Activated CD4-positive, alpha-beta T cell treated with anti-CD3 and anti-CD28 coated beads for 36 hours (primary cell): ENCODE measurements at regions of chr3 and their contacts with region 1.

Region 1: DNA sequence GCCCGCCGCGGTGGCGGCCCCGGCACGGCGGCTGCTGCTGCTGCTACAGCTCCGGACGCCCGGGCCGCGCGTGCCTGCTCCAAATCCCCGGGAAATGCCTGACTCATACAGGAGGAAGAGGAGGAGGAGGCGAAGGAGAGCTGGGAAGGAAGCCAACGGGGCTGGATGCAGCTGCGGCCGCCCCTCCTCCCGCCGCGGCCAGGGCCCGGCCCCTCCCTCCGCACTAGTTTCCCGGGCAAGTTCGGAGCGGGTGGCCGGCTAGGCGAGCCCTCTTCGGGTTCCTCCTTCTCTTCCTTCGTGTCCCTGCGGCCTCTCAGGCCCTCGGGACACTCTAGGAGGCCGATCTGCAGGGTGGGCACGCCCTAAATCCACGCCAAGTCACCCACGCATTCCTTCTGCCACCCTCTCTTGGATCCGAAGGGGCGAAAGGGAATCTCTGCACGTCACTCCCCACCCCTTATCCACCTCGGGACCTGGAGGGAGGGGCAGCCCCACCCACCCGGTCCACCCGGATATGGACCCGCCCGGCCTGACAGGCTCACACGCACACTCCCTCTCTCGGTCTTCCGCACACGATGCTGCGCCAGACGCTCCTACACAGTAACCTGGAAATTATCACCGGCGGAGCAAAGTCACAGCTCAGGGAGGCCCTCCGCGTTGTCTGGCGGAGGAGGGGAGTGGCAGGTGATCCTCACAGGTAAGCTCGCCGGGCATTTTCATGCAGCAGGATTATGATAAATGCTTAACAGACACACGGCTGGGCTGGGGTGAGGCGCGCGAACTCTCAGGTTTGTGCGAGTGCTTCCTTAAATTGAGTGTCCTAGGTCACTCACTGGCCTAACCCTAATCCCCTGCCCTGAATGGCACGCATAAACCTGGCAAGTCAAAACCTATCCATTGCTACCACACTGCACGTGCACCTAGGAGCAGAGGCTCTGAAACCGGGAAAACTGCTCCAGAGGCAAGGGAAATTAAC is at the starts of genes OSBPL10 and ZNF860:
- DNase-seq: peak; percentile 58
- ATAC-seq: peak; percentile 44
- H3K4me3 Mint-ChIP-seq: peak within 1 kb of the TSS; percentile 74
- H3K27ac Mint-ChIP-seq: peak within 1 kb of the TSS; percentile 53
- H3K4me1 Mint-ChIP-seq: peaks cover 20% of the 10 kb centered on the region
- H3K27me3 Mint-ChIP-seq: peaks cover 39% of the 10 kb centered on the region
- total RNA-seq, gene OSBPL10: 11.2 to 11.8 TPM
- total RNA-seq, gene ZNF860: 0.11 to 0.30 TPM

Region 2: DNA sequence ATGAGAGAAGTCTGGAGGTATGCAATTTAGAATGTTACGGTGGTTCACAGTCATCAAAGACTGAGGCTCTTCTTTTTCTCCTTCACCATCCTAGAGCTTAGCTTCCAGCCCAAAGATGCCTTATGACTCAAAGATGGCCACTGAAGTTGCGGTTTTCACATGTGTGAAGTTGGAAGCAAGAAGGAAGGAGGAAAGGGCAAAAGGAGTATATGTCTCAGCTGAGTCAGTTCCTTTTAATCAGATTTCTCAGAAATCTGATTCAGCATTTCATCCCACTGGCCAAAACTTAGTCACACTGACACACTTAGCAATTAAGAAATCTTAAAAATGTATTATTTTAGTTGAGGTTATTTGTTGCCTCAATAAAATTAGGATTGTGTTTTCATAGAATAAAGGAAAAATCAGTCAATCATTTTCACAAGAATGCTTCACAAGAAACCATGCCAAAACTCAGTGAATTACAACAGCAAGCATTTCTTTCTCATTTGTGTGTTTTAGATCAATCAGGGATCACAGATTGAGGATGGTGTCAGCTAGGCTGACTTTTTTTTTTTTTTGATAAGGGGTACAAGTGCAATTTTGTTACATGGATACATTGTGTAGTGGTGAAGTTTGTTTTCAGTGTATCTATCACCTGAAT is 875.9 kb before region 1 on chr3:
- CTCF ChIA-PET with region 1: no interaction called
- POLR2A ChIA-PET with region 1: no interaction called
- intact Hi-C with region 1: loop called in 1 of 2 experiments (anchors 10 kb)
- DNase-seq: peak; percentile 38
- ATAC-seq: peak; percentile 47
- H3K4me3 Mint-ChIP-seq: no peak overlapping the region
- H3K27ac Mint-ChIP-seq: no peak overlapping the region
- H3K4me1 Mint-ChIP-seq: peaks cover 40% of the 10 kb centered on the region
- H3K27me3 Mint-ChIP-seq: no peaks in the 10 kb centered on the region

Region 3: GRCh38 chr3:31754575-31755278 is 226.8 kb before region 1 on chr3:
- CTCF ChIA-PET with region 1: no interaction called
- POLR2A ChIA-PET with region 1: no interaction called
- intact Hi-C with region 1: loop called in 1 of 2 experiments (anchors 5 kb)
- DNase-seq: no peak
- ATAC-seq: peak; percentile 57
- H3K4me3 Mint-ChIP-seq: no peak overlapping the region
- H3K27ac Mint-ChIP-seq: peak overlapping the region; percentile 95
- H3K4me1 Mint-ChIP-seq: peaks cover 48% of the 10 kb centered on the region
- H3K27me3 Mint-ChIP-seq: peaks cover 2% of the 10 kb centered on the region

Region 4: GRCh38 chr3:32009101-32009500 is 27.6 kb after region 1 on chr3:
- CTCF ChIA-PET with region 1: no interaction called
- POLR2A ChIA-PET with region 1: no interaction called
- intact Hi-C with region 1: no loop called
- DNase-seq: no peak
- ATAC-seq: no peak
- H3K4me3 Mint-ChIP-seq: no peak overlapping the region
- H3K27ac Mint-ChIP-seq: no peak overlapping the region
- H3K4me1 Mint-ChIP-seq: peaks cover 5% of the 10 kb centered on the region
- H3K27me3 Mint-ChIP-seq: peaks cover 7% of the 10 kb centered on the region

Region 5: DNA sequence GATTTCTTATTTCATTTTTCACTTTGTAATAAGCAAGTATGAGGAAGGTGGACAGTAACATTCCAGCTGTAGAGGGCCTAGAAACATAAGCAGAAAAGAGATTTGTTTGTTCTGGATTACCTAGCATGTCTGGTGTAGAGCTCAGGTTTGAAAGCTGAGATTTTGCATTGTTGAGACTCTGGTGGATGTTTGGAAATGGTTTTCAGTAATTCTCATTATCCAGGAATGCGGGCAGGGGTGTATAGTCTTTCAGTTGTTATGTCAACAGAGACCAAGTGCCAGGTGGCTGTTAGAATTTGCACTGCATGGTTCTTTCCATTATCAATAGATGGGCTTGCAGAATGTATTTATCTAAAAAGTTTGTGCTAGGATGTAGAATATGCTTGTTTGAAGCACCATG is 135.8 kb after region 1 on chr3:
- CTCF ChIA-PET with region 1: no interaction called
- POLR2A ChIA-PET with region 1: no interaction called
- intact Hi-C with region 1: loop called in 1 of 2 experiments (anchors 1 kb)
- DNase-seq: no peak
- ATAC-seq: no peak
- H3K4me3 Mint-ChIP-seq: no peak overlapping the region
- H3K27ac Mint-ChIP-seq: no peak overlapping the region
- H3K4me1 Mint-ChIP-seq: peaks cover 55% of the 10 kb centered on the region
- H3K27me3 Mint-ChIP-seq: no peaks in the 10 kb centered on the region